ENCODE measurements at regions of chr2 and their contacts with region 1.

Region 1: GRCh38 chr2:156892467-156893281 is 364.8 kb upstream of the GALNT5 start:
- DNase-seq: no peak
- H3K4me3 Mint-ChIP-seq: no peak overlapping the region
- H3K27ac Mint-ChIP-seq: no peak overlapping the region
- H3K4me1 Mint-ChIP-seq: peaks cover 43% of the 10 kb centered on the region
- H3K27me3 Mint-ChIP-seq: peaks cover 53% of the 10 kb centered on the region

Region 2: DNA sequence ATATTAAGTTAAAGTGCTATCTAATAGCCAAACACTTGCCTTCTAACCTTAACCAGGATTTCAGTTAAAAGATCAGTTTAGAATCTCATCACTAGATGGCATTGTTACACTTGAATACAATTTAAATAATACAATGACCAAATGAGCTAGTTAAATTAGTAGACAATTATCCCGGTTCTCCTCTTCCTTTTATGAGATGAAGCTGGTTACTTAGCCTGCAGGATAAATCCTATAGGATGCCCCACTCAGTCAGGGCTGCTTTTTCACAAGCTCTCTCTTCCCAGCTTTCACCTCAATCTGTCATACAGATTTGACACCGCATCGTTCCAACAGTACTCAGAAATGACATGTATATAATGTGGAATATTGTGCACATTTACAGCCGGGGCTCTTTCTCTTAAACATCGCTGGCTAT is 1515.4 kb before region 1 on chr2:
- intact Hi-C with region 1: loop called (anchors 2 kb)
- DNase-seq: no peak
- H3K4me3 Mint-ChIP-seq: no peak overlapping the region
- H3K27ac Mint-ChIP-seq: no peak overlapping the region
- H3K4me1 Mint-ChIP-seq: peaks cover 10% of the 10 kb centered on the region
- H3K27me3 Mint-ChIP-seq: peaks cover 5% of the 10 kb centered on the region

Region 3: DNA sequence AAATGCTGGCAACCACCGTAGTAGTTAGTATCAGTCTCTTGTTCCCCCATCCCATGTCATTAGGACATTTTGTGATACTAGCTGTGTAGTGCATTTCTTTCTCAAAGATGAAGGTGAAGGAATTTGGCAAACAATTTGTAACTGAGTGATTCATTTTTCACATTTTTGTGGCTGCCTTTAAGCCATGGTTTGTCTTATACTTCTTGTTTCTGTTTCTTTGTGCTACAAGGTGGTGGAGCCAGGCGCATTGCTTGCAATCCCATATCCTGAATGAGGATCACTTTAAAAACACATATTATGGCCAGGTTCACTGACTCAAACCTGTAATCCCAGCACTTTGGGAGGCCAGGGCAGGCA is 415.8 kb before region 1 on chr2:
- intact Hi-C with region 1: loop called (anchors 1 kb)
- DNase-seq: peak; percentile 11
- H3K4me3 Mint-ChIP-seq: peak overlapping the region; percentile 76
- H3K27ac Mint-ChIP-seq: peak overlapping the region; percentile 92
- H3K4me1 Mint-ChIP-seq: peaks cover 69% of the 10 kb centered on the region
- H3K27me3 Mint-ChIP-seq: no peaks in the 10 kb centered on the region

Region 4: GRCh38 chr2:156908825-156909224 is 16.2 kb after region 1 on chr2:
- intact Hi-C with region 1: loop called (anchors 1 kb)
- DNase-seq: no peak
- H3K4me3 Mint-ChIP-seq: no peak overlapping the region
- H3K27ac Mint-ChIP-seq: no peak overlapping the region
- H3K4me1 Mint-ChIP-seq: peaks cover 11% of the 10 kb centered on the region
- H3K27me3 Mint-ChIP-seq: peaks cover 33% of the 10 kb centered on the region

Region 5: GRCh38 chr2:157055660-157056199 is 163.1 kb after region 1 on chr2:
- intact Hi-C with region 1: loop called (anchors 10 kb)
- DNase-seq: no peak
- H3K4me3 Mint-ChIP-seq: no peak overlapping the region
- H3K27ac Mint-ChIP-seq: no peak overlapping the region
- H3K4me1 Mint-ChIP-seq: no peaks in the 10 kb centered on the region
- H3K27me3 Mint-ChIP-seq: peaks cover 2% of the 10 kb centered on the region

Region 6: DNA sequence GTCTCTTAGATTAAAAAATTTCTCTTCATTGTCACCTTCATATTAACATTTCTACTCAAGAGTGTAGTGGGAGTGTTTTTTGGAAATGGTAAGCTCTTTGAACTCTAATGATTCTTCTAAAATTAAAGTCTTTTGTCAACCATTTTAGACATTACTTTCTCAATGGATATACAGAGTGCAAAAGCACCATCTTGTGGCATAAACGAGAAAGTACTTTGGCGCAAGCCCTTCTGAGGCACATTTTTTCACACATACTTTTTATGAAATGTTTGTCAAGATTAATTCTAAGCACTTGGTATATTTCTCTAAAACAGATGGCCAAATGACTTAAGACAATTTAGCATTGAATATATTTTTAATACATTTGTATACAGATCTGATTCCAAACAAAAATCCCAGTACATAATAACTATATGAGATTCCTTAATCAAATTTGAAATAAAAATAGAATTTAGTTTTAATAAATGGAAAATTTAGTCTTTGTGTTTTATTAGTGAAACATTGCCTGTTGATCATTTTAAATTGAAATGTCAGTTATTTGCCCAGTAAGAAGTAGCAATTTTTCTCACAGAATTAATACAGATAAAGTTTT is 301.5 kb after region 1 on chr2:
- intact Hi-C with region 1: loop called (anchors 5 kb)
- DNase-seq: no peak
- H3K4me3 Mint-ChIP-seq: no peak overlapping the region
- H3K27ac Mint-ChIP-seq: no peak overlapping the region
- H3K4me1 Mint-ChIP-seq: peaks cover 14% of the 10 kb centered on the region
- H3K27me3 Mint-ChIP-seq: peaks cover 21% of the 10 kb centered on the region

Region 7: GRCh38 chr2:157261199-157261783 is 368.6 kb after region 1 on chr2:
- intact Hi-C with region 1: loop called (anchors 5 kb)
- DNase-seq: peak; percentile 12
- H3K4me3 Mint-ChIP-seq: peak overlapping the region; percentile 57
- H3K27ac Mint-ChIP-seq: peak overlapping the region; percentile 86
- H3K4me1 Mint-ChIP-seq: peaks cover 37% of the 10 kb centered on the region
- H3K27me3 Mint-ChIP-seq: peaks cover 2% of the 10 kb centered on the region